ENCODE measurements at regions of chr21 and their contacts with region 1.

Region 1: DNA sequence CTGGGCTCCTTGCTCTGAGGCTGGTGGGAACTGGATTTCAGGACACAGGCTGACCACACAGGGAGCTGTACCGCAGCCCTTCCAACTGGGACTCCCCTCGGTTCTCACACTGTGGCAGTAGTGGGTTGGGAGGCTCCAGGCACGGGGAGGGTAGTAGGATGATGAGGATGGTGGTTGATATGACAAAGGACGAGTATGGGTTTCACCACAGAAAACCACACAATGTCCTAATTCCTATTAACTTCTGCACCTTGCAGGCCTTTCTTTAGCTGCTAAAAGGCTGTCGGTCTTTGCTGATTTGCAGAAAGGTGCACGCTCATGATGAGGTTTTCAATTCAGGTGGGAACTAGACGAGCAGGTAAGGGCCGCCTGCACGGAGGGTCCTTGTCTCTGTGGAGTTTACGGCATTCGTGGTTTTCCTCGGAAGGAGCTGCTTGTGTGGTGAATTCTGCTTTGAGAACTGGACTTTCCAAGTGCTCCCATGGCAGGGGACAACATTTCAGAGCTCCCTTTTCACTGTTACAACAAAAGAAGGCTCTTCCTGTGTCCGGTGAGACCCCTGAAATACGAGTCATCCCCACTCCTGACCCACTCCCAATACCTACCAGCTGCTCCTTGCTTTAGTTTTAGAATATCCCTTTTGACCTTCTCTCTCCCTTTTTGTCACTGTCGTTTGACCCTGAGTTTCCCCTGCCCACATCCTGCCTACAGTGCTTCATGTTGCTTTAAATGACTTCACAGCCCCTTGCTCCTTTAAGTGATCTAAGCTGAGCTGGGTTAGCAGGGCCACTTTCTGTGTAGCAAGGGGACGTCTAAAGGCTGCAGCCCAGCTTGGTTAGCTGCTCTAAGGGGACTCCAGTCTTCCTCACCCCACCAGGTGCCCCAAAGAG is 125.1 kb downstream of the MRPS6 start:
- DNase-seq: no peak
- ATAC-seq: no peak
- H3K4me3 ChIP-seq: no peak overlapping the region
- H3K27ac ChIP-seq: no peak overlapping the region
- H3K4me1 ChIP-seq: peaks cover 0 to 6% (median 0%) of the 10 kb centered on the region in 4 donors
- H3K27me3 ChIP-seq: no peaks in the 10 kb centered on the region
- CTCF ChIP-seq: no peak
- POLR2A ChIP-seq: no peak

Region 2: GRCh38 chr21:34148419-34148804 is 50.1 kb before region 1 on chr21:
- intact Hi-C with region 1: loop called in 1 of 2 experiments (anchors 10 kb)
- DNase-seq: no peak
- ATAC-seq: no peak
- H3K4me3 ChIP-seq: no peak overlapping the region
- H3K27ac ChIP-seq: no peak overlapping the region
- H3K4me1 ChIP-seq: no peaks in the 10 kb centered on the region
- H3K27me3 ChIP-seq: no peaks in the 10 kb centered on the region
- CTCF ChIP-seq: no peak
- POLR2A ChIP-seq: no peak

Region 3: GRCh38 chr21:34362136-34362444 is 163.6 kb after region 1 on chr21:
- intact Hi-C with region 1: no loop called
- DNase-seq: no peak
- ATAC-seq: peak in 3 of 4 donors; percentile 9 to 18 (median 12)
- H3K4me3 ChIP-seq: no peak overlapping the region
- H3K27ac ChIP-seq: no peak overlapping the region
- H3K4me1 ChIP-seq: peaks cover 0 to 3% (median 0%) of the 10 kb centered on the region in 4 donors
- H3K27me3 ChIP-seq: no peaks in the 10 kb centered on the region
- CTCF ChIP-seq: peak in 1 of 4 donors; percentile 2
- POLR2A ChIP-seq: no peak